AG04450 (cell line): ENCODE measurements at regions of chr12 and their contacts with region 1.

Region 1: DNA sequence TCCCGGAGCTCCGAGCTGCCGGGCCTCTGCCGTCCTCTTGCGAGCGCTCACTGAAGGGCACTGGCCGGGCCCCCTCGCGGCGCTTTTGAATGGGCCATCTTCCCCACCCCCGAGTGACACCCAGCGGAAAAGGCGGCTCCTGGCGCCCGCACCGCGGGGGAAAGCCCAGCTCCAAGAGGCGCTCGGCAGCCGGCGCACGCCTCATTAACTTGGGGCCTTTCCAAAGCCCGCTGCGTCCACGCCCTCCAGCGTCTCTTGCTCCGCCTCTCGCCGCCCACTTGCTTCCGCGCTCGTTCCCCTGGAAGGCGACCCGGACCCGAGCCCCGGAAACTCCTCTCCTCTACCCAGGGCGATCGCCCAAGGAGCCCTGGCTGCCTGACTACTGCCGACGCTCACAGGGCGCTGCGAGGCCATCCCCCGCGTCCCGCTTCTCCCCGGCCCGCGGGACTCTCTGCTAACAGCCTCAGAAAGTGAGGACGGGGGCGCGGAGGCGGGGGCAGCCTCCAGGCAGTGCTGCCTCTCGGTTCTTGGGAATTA is at the start of gene PHLDA1:
- DNase-seq: peak; percentile 97
- H3K4me3 ChIP-seq: peak within 1 kb of the TSS; percentile 98
- H3K27ac ChIP-seq: peak within 1 kb of the TSS; percentile 99
- H3K27me3 ChIP-seq: no peaks in the 10 kb centered on the region
- CTCF ChIP-seq: peak; percentile 58
- polyA plus RNA-seq, gene PHLDA1: 89.0 and 99.5 TPM in 2 replicates

Region 2: GRCh38 chr12:75660805-75661404 is 370.7 kb before region 1 on chr12:
- CTCF ChIA-PET with region 1: no interaction called
- POLR2A ChIA-PET with region 1: interaction called, 10 read pairs
- DNase-seq: no peak
- H3K4me3 ChIP-seq: no peak overlapping the region
- H3K27ac ChIP-seq: peak overlapping the region; percentile 49
- H3K27me3 ChIP-seq: no peaks in the 10 kb centered on the region
- CTCF ChIP-seq: no peak

Region 3: DNA sequence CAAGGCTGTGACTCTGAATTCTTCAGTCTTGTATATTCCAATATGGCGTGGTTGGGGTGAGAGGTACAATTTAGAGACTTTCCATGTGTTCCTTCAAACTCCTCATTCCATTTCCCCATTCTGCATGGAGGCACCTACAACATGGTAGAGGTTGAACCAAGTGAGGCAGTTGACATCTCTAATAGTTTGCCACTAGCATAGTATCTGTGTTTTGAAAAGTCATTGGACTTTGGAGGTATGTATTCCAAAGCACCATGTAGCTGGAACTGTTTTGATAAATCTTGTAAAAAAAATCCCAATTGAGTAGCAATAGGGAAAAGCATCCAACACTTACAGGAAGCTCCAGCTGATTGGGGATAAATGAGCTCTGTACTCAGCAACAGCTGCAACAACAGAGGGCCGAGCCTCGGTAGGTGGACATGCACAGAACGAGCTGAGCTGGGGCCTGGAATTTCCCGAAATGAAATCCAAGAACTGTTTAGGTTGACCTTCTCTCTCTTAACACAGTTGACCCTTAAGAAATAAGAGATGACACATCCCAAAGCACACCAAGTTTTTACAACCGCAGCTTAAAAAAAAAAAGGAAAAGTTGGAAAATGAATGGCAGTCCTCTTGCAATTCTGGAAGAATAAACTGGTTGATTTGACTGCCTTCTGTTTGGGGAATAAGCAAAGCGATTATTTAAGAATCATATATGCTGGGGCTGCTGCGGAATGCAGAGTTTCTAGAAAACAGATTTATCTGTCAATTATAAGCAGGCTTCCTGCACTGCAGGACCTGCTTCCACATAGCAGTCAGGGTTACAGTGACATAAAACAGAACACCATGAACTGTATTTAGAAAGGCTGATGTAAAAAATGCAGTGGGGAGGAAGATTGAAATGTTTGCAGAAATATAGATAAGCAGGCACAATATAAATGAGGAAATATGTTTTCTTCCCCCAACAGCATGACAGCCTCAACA is 325.6 kb before region 1 on chr12:
- CTCF ChIA-PET with region 1: no interaction called
- POLR2A ChIA-PET with region 1: interaction called, 26 read pairs
- DNase-seq: peak; percentile 99
- H3K4me3 ChIP-seq: no peak overlapping the region
- H3K27ac ChIP-seq: peak overlapping the region; percentile 84
- H3K27me3 ChIP-seq: no peaks in the 10 kb centered on the region
- CTCF ChIP-seq: no peak

Region 4: GRCh38 chr12:75977952-75978671 is 53.5 kb before region 1 on chr12:
- CTCF ChIA-PET with region 1: no interaction called
- POLR2A ChIA-PET with region 1: interaction called, 17 read pairs
- DNase-seq: peak; percentile 99
- H3K4me3 ChIP-seq: no peak overlapping the region
- H3K27ac ChIP-seq: peak overlapping the region; percentile 93
- H3K27me3 ChIP-seq: no peaks in the 10 kb centered on the region
- CTCF ChIP-seq: no peak; the same call in 1 of the 2 replicates

Region 5: DNA sequence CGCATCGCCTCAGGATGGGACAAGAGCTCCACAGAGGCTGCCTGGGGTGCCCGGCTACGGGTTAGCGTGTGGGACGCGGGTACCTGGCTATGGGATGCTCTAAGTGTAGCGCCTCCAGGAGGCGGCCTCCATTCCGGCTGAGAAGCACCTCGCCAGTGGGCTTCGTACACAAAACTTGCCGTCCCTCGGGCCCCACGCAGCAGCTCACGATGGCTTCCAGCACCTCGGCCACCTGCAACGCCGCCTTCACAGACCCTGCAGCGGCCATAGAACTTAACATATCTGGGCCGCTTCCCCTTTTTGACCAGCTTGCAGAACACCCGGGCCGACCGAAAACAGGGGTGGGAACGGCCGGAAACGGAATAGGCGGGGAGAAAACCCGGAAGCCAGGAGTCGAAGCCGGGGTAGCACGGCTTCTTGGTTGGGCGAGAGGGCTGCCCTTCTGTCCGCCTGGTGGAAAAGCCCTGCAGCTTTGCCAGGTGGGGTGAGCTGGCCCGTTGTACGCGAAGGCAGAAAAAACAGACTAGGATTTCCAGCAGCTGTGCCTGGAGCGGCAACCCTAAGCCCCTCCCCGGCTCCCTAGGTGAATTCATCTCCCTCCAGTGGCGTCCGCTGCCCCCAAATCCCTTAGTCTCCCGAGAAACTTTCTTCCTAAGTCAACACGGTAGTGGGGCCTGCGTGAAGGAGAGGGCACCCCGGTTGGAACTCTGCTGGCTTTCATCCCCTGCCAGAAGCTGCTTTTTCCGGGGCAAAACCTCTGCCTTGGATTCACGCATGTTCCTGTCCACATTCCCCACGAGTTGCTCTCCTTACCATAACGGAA is 316.7 kb after region 1 on chr12 and contains the start of gene BBS10:
- CTCF ChIA-PET with region 1: interaction called, 4 read pairs
- POLR2A ChIA-PET with region 1: interaction called, 17 read pairs
- DNase-seq: peak; percentile 85
- H3K4me3 ChIP-seq: peak within 1 kb of the TSS; percentile 86
- H3K27ac ChIP-seq: peak within 1 kb of the TSS; percentile 86
- H3K27me3 ChIP-seq: no peaks in the 10 kb centered on the region
- CTCF ChIP-seq: peak; percentile 47
- polyA plus RNA-seq, gene BBS10: 13.5 and 20.0 TPM in 2 replicates